PC-9 (cell line): ENCODE measurements at regions of chr6 and their contacts with region 1.

Region 1: DNA sequence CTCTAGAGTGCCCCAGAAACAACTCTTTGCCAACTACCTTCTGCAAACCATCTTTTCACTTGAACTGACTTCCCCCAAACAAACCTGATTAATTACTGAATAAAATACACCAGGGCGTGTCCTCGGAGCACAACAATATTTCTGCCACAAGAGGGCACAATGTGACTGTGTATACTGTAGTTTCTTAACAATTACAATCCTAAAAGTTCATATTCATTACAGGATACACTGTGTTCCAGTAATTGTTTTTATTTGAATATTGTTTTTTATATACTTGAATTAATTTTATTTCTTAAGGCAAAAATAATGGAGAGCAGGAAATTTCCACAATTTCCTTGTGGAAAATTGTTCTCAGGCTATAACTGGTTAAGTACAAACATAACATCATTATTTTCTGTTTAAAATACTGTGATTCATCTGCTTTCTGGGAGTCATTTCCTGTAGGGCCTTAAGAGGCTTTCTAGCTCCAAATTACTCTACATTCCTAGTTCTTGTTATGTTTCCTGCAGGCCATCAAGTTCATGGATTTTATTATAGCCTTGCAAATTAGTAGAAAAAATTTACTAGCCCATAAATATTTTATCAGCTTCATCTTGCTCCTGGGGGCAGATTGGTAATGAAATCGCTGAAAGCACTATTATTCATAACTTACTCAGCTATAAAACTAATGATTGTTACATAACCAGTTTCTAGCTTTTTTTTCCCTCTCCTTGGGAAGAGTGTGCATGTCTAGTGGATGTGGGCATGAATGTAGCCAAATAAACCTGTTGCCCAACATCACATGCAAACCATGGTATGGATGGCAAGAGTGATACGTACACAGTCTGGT is 51.9 kb upstream of the SLC22A16 start:
- DNase-seq: peak; percentile 43 to 96
- H3K4me3 ChIP-seq: no peak overlapping the region
- H3K27ac ChIP-seq: peak overlapping the region; percentile 64
- H3K4me1 ChIP-seq: peaks cover 36% of the 10 kb centered on the region
- H3K27me3 ChIP-seq: no peaks in the 10 kb centered on the region
- CTCF ChIP-seq: peak; percentile 96

Region 2: DNA sequence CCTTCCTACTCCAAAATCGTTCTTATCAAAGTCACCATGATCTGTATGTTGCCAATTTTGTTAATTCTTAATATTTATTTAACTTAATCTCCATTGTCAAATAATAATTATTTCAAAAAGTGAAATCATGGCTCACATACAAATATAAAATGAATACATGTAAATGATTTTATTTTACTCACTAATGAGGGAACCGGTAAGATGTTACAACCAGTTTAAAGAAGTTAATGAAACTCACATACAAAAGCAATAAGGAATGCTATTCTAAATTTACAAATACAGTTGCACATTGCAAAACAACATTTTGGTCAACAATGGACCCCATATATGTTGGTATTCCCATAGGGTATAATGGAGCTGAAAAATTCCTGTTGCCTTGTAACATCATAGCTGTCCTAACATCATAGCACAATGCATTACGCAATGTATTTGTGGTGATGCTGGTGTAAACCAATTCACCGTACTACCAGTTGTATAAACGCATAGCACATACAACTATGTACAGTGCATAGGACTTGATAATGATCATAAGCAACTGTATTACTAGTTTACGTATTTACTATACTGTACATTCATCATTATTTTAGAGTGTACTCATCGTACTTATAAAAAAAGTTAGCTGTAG is 45.4 kb before region 1 on chr6:
- CTCF ChIA-PET with region 1: no interaction called
- POLR2A ChIA-PET with region 1: no interaction called
- intact Hi-C with region 1: loop called (anchors 1 kb)
- DNase-seq: no peak
- H3K4me3 ChIP-seq: no peak overlapping the region
- H3K27ac ChIP-seq: no peak overlapping the region
- H3K4me1 ChIP-seq: peaks cover 17% of the 10 kb centered on the region
- H3K27me3 ChIP-seq: no peaks in the 10 kb centered on the region
- CTCF ChIP-seq: no peak

Region 3: GRCh38 chr6:110682460-110682853 is 154.1 kb after region 1 on chr6:
- CTCF ChIA-PET with region 1: no interaction called
- POLR2A ChIA-PET with region 1: no interaction called
- intact Hi-C with region 1: loop called (anchors 2 kb)
- DNase-seq: peak; percentile 51 to 81
- H3K4me3 ChIP-seq: no peak overlapping the region
- H3K27ac ChIP-seq: no peak overlapping the region
- H3K4me1 ChIP-seq: peaks cover 4% of the 10 kb centered on the region; the same call in 1 of the 2 replicates
- H3K27me3 ChIP-seq: no peaks in the 10 kb centered on the region
- CTCF ChIP-seq: peak; percentile 91

Region 4: GRCh38 chr6:110873981-110874879 is 345.9 kb after region 1 on chr6 and contains the start of gene AMD1:
- CTCF ChIA-PET with region 1: no interaction called
- POLR2A ChIA-PET with region 1: no interaction called
- intact Hi-C with region 1: loop called (anchors 2 kb)
- DNase-seq: peak; percentile 93 to 95
- H3K4me3 ChIP-seq: peak within 1 kb of the TSS; percentile 90
- H3K27ac ChIP-seq: peak within 1 kb of the TSS; percentile 73
- H3K4me1 ChIP-seq: peaks cover 36% of the 10 kb centered on the region
- H3K27me3 ChIP-seq: no peaks in the 10 kb centered on the region
- CTCF ChIP-seq: no peak
- total RNA-seq, gene AMD1: 40.1 and 46.4 TPM in 2 replicates

Region 5: DNA sequence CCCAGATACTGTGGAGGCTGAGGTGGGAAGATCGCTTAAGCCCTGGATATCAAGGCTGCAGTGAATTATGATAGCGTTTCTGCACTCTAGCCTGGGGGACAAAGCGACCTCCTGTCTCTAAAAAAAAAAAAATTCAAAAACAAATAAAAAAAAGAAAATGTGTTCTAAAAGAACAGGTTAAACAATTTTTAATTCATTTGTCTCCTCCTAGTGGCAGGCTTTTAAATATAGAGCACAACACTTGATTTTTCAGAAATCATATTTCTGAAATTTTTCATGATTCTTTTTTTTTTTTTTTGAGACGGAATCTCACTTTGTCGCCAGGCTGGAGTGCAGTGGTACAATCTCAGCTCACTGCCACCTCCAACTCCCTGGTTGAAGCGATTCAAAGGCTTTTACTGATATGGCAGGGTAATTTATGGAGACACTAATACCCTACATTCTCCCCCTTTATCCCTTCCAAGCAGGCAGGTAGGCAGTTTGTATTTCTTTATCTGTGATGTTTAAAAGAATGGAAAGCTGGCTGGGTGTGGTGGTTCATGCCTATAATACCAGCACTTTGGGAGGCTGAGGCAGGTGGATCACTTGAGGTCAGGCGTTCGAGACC is 421.5 kb after region 1 on chr6:
- CTCF ChIA-PET with region 1: interaction called, 5 read pairs
- POLR2A ChIA-PET with region 1: no interaction called
- intact Hi-C with region 1: loop called (anchors 2 kb)
- DNase-seq: peak; percentile 5 to 56
- H3K4me3 ChIP-seq: no peak overlapping the region
- H3K27ac ChIP-seq: no peak overlapping the region
- H3K4me1 ChIP-seq: peaks cover 30% of the 10 kb centered on the region
- H3K27me3 ChIP-seq: no peaks in the 10 kb centered on the region
- CTCF ChIP-seq: peak; percentile 84

Region 6: GRCh38 chr6:110999634-111000270 is 471.4 kb after region 1 on chr6:
- CTCF ChIA-PET with region 1: no interaction called
- POLR2A ChIA-PET with region 1: no interaction called
- intact Hi-C with region 1: loop called (anchors 1 kb)
- DNase-seq: peak in 1 of 2 experiments; percentile 42
- H3K4me3 ChIP-seq: no peak overlapping the region
- H3K27ac ChIP-seq: no peak overlapping the region
- H3K4me1 ChIP-seq: no peaks in the 10 kb centered on the region
- H3K27me3 ChIP-seq: no peaks in the 10 kb centered on the region
- CTCF ChIP-seq: peak; percentile 78

Region 7: GRCh38 chr6:111789598-111789997 is 1261.3 kb after region 1 on chr6:
- CTCF ChIA-PET with region 1: no interaction called
- POLR2A ChIA-PET with region 1: no interaction called
- intact Hi-C with region 1: no loop called
- DNase-seq: peak in 1 of 2 experiments; percentile 23
- H3K4me3 ChIP-seq: no peak overlapping the region
- H3K27ac ChIP-seq: no peak overlapping the region
- H3K4me1 ChIP-seq: no peaks in the 10 kb centered on the region
- H3K27me3 ChIP-seq: no peaks in the 10 kb centered on the region
- CTCF ChIP-seq: no peak